Aorta (tissue), 5 donors: ENCODE measurements at regions of chr7 and their contacts with region 1.

Region 1: GRCh38 chr7:150898475-150899011 is 46.2 kb downstream of the AOC1 start:
- DNase-seq: peak; percentile 79 to 94
- ATAC-seq: peak; percentile 84
- H3K4me3 ChIP-seq: no peak overlapping the region
- H3K27ac ChIP-seq: no peak overlapping the region
- H3K4me1 ChIP-seq: no peaks in the 10 kb centered on the region
- H3K27me3 ChIP-seq: no peaks in the 10 kb centered on the region

Region 2: DNA sequence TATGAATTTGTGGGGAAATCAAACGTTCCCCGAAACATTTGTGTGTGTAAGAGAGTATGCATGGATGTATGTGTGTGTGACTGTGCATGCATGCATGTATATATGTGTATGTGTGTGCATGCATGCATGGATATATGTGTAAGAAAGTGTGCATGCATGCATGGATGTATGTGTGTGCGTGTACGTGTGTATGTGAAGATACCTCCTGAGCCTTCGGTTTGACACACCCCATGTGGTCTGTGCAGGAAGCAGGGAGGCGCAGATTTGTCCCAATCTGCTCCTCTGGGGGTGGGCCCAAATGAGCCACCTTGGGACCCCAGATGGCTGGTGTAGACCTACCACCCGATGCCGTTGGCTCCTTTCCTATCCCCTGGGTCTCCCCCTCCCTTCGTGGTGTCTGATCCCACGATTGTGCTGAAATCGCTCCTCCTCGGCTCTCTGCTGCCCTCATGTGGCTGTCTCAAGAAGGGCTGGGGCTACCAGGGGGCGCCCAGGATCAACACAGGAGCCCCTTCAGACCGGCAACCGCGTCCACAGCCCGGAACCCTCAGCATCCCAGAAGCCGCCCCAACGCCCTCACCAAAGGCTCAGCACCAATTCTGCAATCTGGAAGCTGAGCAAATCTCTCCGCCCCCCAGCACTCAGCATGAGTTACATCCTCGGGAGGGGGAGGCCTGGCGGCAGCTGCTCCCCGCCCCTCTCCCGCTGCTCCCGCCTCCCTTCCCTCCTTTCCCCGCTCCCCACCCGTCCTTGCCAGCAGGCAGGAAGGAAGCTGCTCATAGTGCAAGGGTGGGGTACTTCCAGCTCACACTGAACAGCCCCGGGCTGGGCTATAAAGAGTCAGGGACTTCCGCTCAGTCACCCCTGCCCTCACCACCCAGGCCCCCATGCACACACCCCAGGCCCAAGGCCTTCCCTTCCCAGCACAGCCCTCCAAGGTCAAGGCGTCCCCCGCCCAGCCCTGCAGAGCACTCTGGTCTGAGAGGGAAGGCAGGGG is 90.0 kb after region 1 on chr7:
- intact Hi-C with region 1: loop called (anchors 1 to 5 kb)
- DNase-seq: peak; percentile 63 to 82
- ATAC-seq: peak; percentile 70
- H3K4me3 ChIP-seq: no peak overlapping the region
- H3K27ac ChIP-seq: no peak overlapping the region
- H3K4me1 ChIP-seq: no peaks in the 10 kb centered on the region
- H3K27me3 ChIP-seq: peaks cover 0 to 6% of the 10 kb centered on the region in 2 donors

Region 3: GRCh38 chr7:151008511-151009323 is 110.2 kb after region 1 on chr7:
- intact Hi-C with region 1: loop called in 1 of 2 experiments (anchors 5 kb)
- DNase-seq: peak; percentile 77 to 90
- ATAC-seq: peak; percentile 75
- H3K4me3 ChIP-seq: no peak overlapping the region
- H3K27ac ChIP-seq: no peak overlapping the region
- H3K4me1 ChIP-seq: no peaks in the 10 kb centered on the region
- H3K27me3 ChIP-seq: no peaks in the 10 kb centered on the region

Region 4: DNA sequence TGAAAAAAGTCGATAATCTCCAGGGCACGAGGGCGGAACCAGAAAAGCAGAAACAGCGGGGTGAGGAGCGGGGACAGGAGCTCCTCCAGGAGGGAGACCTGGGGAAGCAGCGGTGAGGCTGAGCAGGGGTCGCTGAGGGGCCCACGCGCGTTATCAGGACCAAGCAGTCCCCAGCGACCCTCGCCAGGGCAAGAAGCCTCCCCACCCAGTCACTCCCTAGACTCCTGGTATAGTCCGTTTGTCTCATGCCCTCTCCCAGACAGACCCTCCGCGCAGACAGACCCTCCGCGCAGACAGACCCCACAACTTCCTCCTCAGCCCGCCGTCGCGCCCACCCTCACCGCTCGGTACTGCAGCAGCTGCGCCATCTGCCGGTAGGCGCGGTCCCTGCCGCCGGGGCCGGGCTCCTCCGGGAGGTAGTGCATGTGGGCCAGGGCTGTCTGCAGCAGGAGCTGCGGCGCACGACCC is 119.4 kb after region 1 on chr7:
- intact Hi-C with region 1: loop called in 1 of 2 experiments (anchors 5 kb)
- DNase-seq: peak; percentile 75 to 92
- ATAC-seq: peak; percentile 69
- H3K4me3 ChIP-seq: no peak overlapping the region
- H3K27ac ChIP-seq: no peak overlapping the region
- H3K4me1 ChIP-seq: no peaks in the 10 kb centered on the region
- H3K27me3 ChIP-seq: no peaks in the 10 kb centered on the region

Region 5: GRCh38 chr7:151143261-151144015 is 244.9 kb after region 1 on chr7:
- intact Hi-C with region 1: no loop called
- DNase-seq: peak in 1 of 2 donors; percentile 59
- ATAC-seq: no peak
- H3K4me3 ChIP-seq: no peak overlapping the region
- H3K27ac ChIP-seq: no peak overlapping the region
- H3K4me1 ChIP-seq: no peaks in the 10 kb centered on the region
- H3K27me3 ChIP-seq: no peaks in the 10 kb centered on the region